Stomach (tissue), 19 donors: ENCODE measurements at regions of chr15 and their contacts with region 1.

Region 1: DNA sequence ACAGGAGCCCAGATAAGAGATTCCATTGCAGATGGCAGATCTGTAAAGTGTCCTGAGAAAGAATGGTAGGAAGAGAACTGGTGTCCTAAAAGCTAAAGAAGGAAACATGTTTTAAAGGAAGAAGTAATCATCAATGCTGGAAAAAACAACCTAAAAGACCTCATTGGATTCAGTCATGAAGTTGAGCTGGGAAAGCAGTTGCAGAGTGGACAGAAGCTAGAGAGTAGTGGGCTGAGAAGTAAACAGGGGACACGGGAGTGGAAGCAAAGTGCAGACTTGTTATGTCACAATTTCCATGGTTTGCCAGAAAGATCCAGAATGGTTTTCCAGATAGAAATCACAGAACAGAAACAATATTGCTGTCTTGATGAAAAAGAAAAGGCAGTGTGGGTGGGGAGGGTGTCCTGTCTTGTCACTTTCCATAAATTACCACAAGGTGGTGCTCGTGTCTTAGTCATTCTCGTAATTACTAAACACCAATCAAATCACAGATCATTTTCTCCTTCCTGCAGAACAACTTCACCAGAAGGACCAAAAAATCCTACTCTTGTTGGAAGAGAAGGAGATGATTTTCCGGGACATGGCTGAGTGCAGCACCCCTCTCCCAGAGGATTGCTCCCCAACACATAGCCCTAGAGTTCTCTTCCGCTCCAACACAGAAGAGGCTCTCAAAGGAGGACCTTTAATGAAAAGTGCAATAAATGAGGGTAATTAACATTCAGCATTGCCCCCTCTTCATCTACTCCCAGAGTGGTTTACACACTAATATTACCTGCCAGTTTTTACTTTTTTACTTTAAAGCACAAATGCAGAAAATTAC is 64.5 kb downstream of the KLHL25 start:
- DNase-seq: peak in 1 of 2 donors; percentile 87
- H3K4me3 ChIP-seq: no peak overlapping the region
- H3K27ac ChIP-seq: peak overlapping the region in 3 of 5 donors; percentile 19 to 73 (median 35)
- H3K4me1 ChIP-seq: peaks cover 0 to 40% (median 23%) of the 10 kb centered on the region in 4 donors
- H3K27me3 ChIP-seq: no peaks in the 10 kb centered on the region
- CTCF ChIP-seq: peak in 5 of 7 experiments; percentile 64 to 85 (median 71)
- EP300 ChIP-seq: no peak
- POLR2A ChIP-seq: no peak

Region 2: DNA sequence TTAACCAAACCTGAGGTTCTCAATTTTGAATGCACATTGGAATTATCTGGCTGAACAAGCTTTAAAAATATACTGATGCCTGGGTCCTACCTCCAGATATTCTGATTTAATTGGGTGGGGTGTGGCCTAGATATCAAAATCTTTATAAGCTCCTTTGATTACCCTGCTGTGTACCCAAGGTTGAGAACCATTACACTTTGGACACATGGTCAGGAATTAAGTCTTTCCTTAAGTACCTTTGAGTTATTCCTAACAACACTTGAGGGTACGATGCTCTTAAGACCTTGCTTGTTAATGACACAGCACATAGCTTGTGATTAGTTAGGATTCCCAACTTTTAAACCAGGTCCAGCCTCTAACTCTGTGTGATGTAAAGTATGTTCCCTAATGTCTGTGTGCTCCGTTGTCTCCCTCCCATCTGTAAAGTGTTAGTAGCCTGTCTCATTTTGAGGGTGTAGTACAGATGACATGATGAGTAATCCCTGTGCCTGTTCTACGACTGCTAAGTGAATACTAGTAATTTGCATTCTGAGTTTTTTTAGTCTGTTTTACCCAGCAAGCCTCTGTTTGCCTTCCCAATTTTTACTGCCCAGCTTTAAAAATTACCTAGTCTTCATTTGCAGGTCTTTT is 90.3 kb before region 1 on chr15:
- intact Hi-C with region 1: no loop called
- DNase-seq: no peak
- H3K4me3 ChIP-seq: no peak overlapping the region
- H3K27ac ChIP-seq: peak overlapping the region in 2 of 5 donors; percentile 15 to 20
- H3K4me1 ChIP-seq: peaks cover 22 to 79% (median 46%) of the 10 kb centered on the region in 4 donors
- H3K27me3 ChIP-seq: no peaks in the 10 kb centered on the region
- CTCF ChIP-seq: no peak
- EP300 ChIP-seq: no peak
- POLR2A ChIP-seq: no peak

Region 3: GRCh38 chr15:85837011-85837433 is 106.8 kb after region 1 on chr15:
- intact Hi-C with region 1: loop called (anchors 5 kb)
- DNase-seq: peak; percentile 77 to 90
- H3K4me3 ChIP-seq: no peak overlapping the region
- H3K27ac ChIP-seq: peak overlapping the region; percentile 83 to 93 (median 86)
- H3K4me1 ChIP-seq: peaks cover 31 to 38% (median 36%) of the 10 kb centered on the region in 4 donors
- H3K27me3 ChIP-seq: no peaks in the 10 kb centered on the region
- CTCF ChIP-seq: no peak
- EP300 ChIP-seq: no peak
- POLR2A ChIP-seq: no peak

Region 4: GRCh38 chr15:86300390-86301125 is 570.3 kb after region 1 on chr15:
- intact Hi-C with region 1: no loop called
- DNase-seq: no peak
- H3K4me3 ChIP-seq: no peak overlapping the region
- H3K27ac ChIP-seq: no peak overlapping the region
- H3K4me1 ChIP-seq: no peaks in the 10 kb centered on the region
- H3K27me3 ChIP-seq: no peaks in the 10 kb centered on the region
- CTCF ChIP-seq: no peak
- EP300 ChIP-seq: no peak
- POLR2A ChIP-seq: no peak